SK-N-SH (cell line): ENCODE measurements at regions of chr1 and their contacts with region 1.

Region 1: DNA sequence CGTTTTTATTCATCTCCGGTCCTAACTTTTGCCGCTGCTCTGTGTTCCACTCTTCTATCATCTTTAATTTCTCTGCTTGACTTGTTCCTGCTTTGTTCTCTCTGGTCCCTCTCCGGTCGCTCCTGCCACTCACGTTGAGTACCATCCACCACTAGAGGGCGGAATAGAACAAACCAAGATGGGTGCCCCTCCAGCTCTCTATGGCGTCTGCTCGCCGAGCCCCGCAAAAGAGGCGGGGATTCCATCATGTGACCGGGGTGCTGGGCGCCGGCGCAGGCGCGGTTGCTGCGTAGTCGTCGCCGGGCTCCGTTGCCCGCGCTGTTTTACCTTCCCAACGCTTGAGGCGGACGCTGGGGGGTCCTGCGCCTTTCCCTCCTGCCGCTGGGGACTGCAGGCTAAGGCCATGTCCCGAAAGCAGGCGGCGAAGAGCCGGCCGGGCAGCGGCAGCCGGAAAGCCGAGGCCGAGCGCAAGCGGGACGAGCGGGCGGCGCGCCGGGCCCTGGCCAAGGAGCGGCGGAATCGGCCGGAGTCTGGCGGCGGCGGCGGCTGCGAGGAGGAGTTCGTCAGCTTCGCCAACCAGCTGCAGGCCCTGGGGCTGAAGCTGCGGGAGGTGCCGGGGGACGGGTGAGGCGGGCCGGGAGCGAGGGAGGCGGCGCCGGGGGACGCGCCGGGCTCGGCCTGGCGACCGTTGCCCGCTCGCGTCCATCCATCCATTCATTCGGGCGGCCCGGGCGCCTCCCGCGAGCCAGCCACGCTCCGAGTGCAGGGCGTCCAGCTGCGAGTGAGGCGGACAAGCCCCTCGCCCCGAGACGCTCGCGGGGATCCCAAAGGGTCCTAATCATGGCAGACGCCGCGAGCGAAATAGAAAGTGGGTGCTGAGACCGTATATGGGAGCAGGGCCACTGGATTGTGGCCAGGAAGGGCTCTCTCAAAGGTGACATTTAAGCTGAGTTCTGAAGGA is at the start of gene OTUD3:
- DNase-seq: peak; percentile 97
- H3K4me3 ChIP-seq: peak within 1 kb of the TSS; percentile 77 to 97
- H3K27ac ChIP-seq: peak within 1 kb of the TSS; percentile 82 to 83
- H3K4me1 ChIP-seq: peaks cover 8% of the 10 kb centered on the region in 2 experiments; a peak in 2 of 4 replicates
- H3K27me3 ChIP-seq: no peaks in the 10 kb centered on the region
- CTCF ChIP-seq: peak; percentile 87
- EP300 ChIP-seq: no peak
- RAD21 ChIP-seq: peak; percentile 61
- polyA plus RNA-seq, gene OTUD3: 2.6 and 3.3 TPM in 2 replicates

Region 2: DNA sequence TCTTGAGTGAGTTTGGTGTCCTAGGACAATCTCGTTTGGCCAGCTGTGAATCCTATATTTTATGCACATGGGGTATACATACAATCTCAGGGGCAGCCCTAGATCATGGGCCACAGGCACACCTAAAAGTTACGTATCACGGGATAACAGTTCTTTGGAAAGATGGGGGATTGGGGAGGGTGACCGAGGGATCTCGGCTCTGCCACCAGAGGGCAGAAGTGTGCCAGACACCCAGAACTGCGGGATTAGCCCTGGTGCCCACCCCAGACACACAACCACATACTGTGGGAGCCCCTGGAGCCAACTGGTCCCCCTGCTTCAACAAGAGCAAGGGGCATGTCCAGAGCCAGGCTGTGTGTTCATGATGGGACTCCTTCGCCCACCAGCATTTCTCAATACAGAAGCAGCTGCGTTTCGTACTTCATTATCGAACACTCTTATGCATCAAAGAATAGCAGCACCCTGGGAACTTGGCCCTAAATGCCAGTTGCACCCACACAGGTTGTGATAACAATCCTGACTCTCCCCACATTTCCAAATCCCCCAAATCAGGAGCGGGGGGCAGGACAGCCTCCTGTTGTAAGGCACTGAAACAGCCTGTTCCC is 120.1 kb before region 1 on chr1:
- CTCF ChIA-PET with region 1: interaction called, 10 read pairs
- POLR2A ChIA-PET with region 1: no interaction called
- DNase-seq: peak; percentile 75
- H3K4me3 ChIP-seq: no peak overlapping the region; a peak in 1 of 4 replicates
- H3K27ac ChIP-seq: no peak overlapping the region
- H3K4me1 ChIP-seq: peaks cover 2 to 22% of the 10 kb centered on the region in 2 experiments; a peak in 2 of 4 replicates
- H3K27me3 ChIP-seq: no peaks in the 10 kb centered on the region
- CTCF ChIP-seq: peak; percentile 80
- EP300 ChIP-seq: no peak
- RAD21 ChIP-seq: peak; percentile 63

Region 3: DNA sequence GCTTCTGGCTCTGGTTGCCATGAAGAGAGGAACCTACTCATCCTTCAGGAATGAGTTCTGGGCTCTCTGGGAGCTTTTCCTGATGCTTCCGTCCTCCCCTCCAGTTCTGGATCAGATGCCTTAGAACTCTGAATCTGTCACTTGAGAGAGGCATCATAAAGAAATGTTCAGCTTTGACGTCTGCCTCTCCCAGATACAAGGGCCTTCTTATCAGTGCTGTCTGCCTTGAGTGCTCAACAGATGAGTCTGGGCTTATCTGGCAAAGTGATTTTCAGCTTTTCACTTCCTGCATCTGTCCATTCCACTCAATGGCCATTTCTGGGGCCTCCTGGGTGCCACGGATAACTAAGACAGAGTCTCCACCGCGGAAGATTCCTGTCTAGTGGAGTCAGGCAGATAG is 12.5 kb before region 1 on chr1:
- CTCF ChIA-PET with region 1: interaction called, 19 read pairs
- POLR2A ChIA-PET with region 1: no interaction called
- DNase-seq: no peak
- H3K4me3 ChIP-seq: no peak overlapping the region
- H3K27ac ChIP-seq: no peak overlapping the region
- H3K4me1 ChIP-seq: no peaks in the 10 kb centered on the region; a peak in 1 of 4 replicates
- H3K27me3 ChIP-seq: no peaks in the 10 kb centered on the region
- CTCF ChIP-seq: no peak
- EP300 ChIP-seq: no peak
- RAD21 ChIP-seq: no peak

Region 4: DNA sequence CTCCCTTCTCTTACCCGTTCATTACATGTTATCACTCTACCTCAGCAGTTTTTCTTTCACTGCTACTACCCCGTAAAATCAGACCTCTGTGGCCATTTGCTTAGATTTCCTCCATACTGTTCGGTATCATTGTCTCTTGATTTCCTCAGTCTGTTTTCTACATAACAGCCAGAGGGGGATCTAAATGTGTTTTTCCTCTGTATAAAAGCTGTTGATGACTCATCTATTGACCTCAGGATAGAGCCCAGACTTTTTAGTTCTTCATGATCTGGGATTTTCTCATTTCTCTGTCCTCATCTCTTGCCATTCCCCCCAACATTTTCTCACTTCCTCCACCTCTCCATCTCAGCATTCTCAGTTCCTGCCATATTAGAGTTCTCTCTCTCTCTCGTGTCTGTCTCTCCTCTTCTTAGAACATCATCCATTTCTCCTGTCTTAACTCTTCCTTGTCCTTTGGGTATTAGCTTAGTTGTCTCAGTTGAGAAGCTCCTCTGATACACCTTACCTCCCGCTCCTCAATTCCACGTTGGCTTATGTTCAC is 10.3 kb after region 1 on chr1:
- CTCF ChIA-PET with region 1: interaction called, 12 read pairs
- POLR2A ChIA-PET with region 1: no interaction called
- DNase-seq: no peak
- H3K4me3 ChIP-seq: no peak overlapping the region
- H3K27ac ChIP-seq: no peak overlapping the region
- H3K4me1 ChIP-seq: no peaks in the 10 kb centered on the region
- H3K27me3 ChIP-seq: no peaks in the 10 kb centered on the region
- CTCF ChIP-seq: no peak
- EP300 ChIP-seq: no peak
- RAD21 ChIP-seq: no peak

Region 5: DNA sequence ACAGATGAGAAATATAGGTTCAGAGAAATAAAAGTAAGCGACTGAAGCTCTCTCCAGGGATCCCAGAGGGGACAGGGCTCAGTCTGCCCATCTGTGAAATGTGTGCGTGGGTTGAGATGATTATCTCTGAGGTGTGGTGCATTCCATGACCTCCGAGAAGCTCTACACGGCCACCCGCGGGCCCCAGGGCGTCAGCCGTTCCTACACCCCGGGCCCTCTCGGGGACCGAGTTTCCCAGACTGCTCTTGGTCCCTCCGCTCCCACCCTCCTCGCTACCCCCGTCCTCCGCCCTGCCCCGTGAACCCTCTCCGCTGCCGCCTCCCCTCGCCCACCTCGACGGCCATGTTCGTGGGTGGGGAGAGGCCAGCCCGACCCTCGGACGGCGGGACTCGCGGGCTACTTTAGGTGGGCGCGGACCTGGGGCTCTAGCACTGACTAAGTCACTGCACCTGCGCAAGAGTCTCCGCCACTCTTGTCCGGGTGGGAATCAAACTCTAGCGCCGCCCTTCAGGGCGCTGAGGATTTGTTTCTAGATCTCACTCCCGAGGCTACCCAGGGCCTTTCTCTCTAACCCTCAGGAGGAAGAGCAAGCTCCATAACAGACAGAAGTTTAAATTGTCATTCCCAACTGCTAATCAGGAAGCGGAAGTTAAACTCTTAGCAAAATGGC is 360.6 kb after region 1 on chr1:
- CTCF ChIA-PET with region 1: no interaction called
- POLR2A ChIA-PET with region 1: no interaction called
- DNase-seq: no peak
- H3K4me3 ChIP-seq: no peak overlapping the region
- H3K27ac ChIP-seq: no peak overlapping the region
- H3K4me1 ChIP-seq: no peaks in the 10 kb centered on the region
- H3K27me3 ChIP-seq: no peaks in the 10 kb centered on the region; the same call in none of the 2 replicates
- CTCF ChIP-seq: no peak
- EP300 ChIP-seq: no peak
- RAD21 ChIP-seq: no peak